ENCODE measurements at regions of chr11 and their contacts with region 1.

Region 1: GRCh38 chr11:109960831-109961230 is 132.4 kb upstream of the ZC3H12C start:
- DNase-seq: peak; percentile 49 to 87
- H3K4me3 ChIP-seq: no peak overlapping the region
- CTCF ChIP-seq: no peak
- POLR2A ChIP-seq: no peak

Region 2: GRCh38 chr11:109939166-109939810 is 21.5 kb before region 1 on chr11:
- intact Hi-C with region 1: no loop called
- DNase-seq: peak in 1 of 2 donors; percentile 39
- H3K4me3 ChIP-seq: no peak overlapping the region
- CTCF ChIP-seq: no peak
- POLR2A ChIP-seq: no peak

Region 3: DNA sequence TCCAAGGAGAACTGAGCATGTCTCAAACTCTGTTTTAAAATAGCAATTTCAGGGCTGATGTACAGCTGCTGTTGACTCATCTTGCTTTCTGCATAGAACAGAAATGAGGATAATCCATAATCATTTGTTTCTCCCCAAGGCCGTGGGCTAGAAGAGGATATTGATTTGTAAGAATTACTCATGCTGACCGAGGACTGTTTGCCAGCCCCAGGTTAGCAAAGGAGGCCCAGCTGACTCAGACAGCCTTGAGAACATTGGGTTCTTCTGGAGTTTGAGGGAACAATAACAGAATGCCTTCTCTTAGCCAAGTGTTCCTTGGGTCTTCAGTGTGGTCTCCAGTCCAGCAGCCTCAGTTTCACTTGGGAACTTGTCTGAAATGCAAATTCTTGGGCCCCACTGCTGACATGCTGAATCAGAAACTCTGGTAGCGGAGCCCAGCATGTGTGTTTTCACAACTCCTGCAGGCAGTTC is 224.3 kb after region 1 on chr11:
- intact Hi-C with region 1: loop called (anchors 5 kb)
- DNase-seq: no peak
- H3K4me3 ChIP-seq: no peak overlapping the region
- CTCF ChIP-seq: no peak
- POLR2A ChIP-seq: no peak

Region 4: GRCh38 chr11:110376711-110377324 is 416.0 kb after region 1 on chr11:
- intact Hi-C with region 1: no loop called
- DNase-seq: peak; percentile 57 to 89
- H3K4me3 ChIP-seq: no peak overlapping the region
- CTCF ChIP-seq: peak in 1 of 3 donors; percentile 10
- POLR2A ChIP-seq: no peak

Region 5: DNA sequence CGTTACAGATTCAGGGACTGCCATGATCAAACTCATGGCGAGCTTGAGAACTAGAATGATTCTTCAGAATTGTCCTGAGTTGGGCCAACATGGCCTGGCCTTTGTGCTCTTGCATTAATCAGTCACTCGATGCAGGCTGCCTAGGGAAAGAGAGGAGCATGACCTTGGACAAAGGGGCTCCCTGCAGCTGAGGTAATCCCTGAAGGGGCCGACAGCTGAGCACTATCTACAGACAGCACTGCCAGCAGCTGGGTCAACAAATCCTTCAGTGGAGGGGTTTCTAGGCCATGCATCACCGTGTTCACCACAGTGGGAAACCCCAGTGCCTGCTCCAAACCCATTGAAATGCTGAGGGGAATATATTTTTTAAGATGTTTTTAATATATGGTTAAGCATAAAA is 1125.2 kb after region 1 on chr11:
- intact Hi-C with region 1: no loop called
- DNase-seq: no peak
- H3K4me3 ChIP-seq: no peak overlapping the region
- CTCF ChIP-seq: no peak
- POLR2A ChIP-seq: no peak